ENCODE measurements at regions of chr9 and their contacts with region 1.

Region 1: DNA sequence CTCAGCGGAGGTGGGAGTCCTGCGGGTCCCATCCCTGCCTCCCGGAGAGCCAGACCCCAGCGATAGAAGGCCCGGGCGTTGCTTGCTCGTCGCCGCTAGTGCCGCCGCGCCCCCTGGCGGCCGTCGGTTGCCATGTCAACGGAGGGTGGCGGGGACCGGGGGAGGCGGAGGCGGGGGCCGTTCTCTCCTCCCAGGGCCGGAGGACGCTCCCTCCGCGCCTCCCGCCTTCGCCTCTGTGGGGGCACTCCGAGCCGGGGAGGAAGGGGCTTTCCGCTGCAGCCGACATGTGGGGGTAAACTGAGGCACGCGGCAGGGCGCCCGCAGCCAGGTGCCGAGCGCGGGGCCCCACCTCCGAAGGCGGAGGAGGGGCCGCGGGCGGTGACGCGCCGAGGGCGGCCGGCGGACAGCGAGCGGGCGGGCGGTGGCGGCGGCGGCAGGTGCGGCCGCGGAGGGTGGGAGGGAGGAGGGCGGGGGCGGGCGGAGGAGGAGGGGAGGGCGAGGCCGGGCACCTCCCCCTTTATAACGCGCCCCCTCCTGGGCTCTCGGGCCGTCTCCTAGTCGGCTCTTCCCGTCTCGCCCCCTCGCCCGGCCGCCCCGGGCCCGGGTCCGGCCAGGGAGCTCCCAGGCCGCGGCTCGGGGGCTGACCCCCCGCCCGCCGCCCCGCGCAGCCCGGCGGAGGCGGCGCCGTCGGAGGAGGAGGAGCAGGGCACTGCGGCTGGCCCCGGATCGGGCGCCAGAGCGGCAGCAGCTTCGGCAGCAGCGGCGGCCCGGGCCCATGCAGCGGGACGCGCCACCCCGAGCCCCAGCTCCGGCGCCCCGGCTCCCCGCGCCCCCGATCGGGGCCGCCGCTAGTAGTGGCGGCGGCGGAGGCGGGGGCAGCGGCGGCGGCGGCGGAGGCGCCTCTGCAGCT is 556 bp upstream of the CDK9 start:
- DNase-seq: peak; percentile 93
- H3K4me3 Mint-ChIP-seq: peak overlapping the region; percentile 97
- H3K27ac Mint-ChIP-seq: peak overlapping the region; percentile 93
- H3K4me1 Mint-ChIP-seq: peaks cover 78% of the 10 kb centered on the region
- H3K27me3 Mint-ChIP-seq: no peaks in the 10 kb centered on the region

Region 2: DNA sequence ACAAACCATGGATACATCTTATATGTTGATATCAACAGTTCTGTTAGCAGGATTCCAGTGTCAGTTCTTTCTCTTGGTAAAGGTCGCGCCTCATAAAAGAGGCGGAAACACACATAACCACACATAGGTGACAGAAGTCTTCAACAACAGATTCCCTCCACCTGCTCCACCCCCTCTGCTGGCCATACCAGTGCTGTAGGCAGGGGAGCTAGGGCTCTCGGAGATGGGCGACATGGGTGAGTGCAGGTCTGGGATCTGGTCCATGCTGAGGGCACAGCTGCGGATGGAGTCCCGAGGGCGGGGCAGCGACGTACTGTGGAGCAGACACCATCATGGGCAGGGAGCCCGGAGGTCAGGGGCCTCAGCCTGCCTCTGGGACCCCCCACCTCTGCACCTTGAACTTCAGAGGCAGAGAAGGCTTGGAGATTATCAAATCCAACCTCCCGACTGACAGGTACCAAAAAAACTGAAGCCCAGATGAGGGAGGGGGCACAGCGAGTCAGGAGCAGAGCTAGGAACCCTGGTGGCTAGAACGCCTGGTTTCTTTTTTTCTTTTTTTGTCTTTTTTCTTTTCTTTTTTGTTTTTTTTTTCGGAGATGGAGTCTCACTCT is 38.2 kb before region 1 on chr9:
- CTCF ChIA-PET with region 1: no interaction called
- POLR2A ChIA-PET with region 1: interaction called, 12 read pairs
- DNase-seq: no peak
- H3K4me3 Mint-ChIP-seq: no peak overlapping the region
- H3K27ac Mint-ChIP-seq: no peak overlapping the region
- H3K4me1 Mint-ChIP-seq: peaks cover 5% of the 10 kb centered on the region
- H3K27me3 Mint-ChIP-seq: no peaks in the 10 kb centered on the region

Region 3: DNA sequence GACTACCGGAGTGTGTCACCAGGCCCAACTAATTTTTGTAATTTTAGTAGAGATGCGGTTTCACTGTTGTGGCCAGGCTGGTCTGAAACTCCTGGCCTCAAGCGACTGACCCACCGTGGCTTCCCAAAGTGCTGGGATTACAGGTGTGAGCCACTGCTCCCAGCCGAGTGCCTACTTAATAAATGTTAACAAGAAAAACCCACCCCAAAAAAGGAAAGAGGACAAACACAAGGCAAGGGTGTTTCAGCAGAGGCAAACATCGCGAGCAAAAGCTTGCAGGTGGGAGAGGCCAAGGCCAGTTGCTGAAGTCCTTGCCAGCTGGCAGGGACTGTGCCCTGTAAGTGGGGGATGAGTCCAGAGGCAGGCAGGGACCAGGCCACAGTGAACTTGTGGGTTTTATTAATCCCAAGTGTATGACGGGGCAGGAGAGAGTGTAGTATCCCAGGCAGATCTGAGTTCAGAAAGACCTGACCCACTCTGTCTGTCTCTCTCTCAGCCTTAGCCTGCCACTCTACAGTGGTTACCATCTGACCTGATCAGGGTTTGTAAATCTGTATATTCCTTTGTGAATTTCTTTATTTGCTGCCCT is 11.0 kb after region 1 on chr9:
- CTCF ChIA-PET with region 1: interaction called, 5 read pairs
- POLR2A ChIA-PET with region 1: interaction called, 44 read pairs
- DNase-seq: no peak
- H3K4me3 Mint-ChIP-seq: peak overlapping the region; percentile 35
- H3K27ac Mint-ChIP-seq: peak overlapping the region; percentile 68
- H3K4me1 Mint-ChIP-seq: peaks cover 32% of the 10 kb centered on the region
- H3K27me3 Mint-ChIP-seq: no peaks in the 10 kb centered on the region

Region 4: GRCh38 chr9:127869310-127870152 is 84.3 kb after region 1 on chr9:
- CTCF ChIA-PET with region 1: interaction called, 18 read pairs
- POLR2A ChIA-PET with region 1: interaction called, 9 read pairs
- DNase-seq: peak; percentile 83
- H3K4me3 Mint-ChIP-seq: no peak overlapping the region
- H3K27ac Mint-ChIP-seq: no peak overlapping the region
- H3K4me1 Mint-ChIP-seq: peaks cover 17% of the 10 kb centered on the region
- H3K27me3 Mint-ChIP-seq: no peaks in the 10 kb centered on the region

Region 5: DNA sequence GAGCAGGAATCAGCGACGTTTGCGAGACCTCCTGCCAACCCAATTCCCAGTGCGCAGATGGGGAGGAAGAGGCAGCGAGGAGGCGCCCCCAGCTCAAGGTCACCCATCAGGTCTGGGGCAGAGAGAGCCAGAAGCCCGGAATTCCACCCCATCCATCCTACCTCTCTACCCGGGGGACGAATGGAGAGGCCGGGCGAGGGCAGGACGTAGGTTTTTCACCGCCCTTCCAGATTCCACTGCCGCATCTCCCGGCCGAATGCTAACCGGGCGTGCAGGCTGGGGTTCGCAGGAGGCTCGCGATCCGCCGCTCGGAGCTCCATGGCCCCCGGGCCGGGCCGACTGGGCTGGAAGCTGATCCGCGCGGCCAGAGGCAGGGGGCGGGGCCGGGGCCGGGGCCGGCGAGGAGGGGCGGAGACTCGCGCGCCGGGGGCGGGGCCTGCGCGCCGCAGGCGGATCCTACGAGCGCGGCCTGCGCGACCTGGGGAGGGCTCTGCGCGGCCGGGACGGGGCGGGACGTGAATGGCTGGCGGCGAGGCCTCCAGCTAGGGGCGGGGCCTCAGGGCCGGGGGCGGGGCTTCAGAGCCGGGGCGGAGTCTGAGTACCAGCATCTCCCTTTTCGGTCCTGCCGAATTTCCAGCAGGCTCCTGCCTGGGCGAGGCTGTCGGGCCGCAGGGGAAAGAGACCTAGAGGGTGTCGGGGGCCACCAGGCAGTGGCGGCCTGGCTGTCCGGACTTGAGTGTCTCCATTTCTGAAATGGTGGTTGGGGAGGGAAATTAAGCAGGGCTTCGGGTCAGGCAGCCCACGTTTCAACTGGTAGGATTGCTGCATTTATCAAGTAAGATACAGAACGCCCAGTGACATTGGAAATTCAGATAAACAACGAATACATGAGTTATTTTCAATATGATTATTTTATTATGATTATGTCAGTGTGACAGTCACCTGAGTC is 131.7 kb after region 1 on chr9 and contains the start of gene ST6GALNAC4:
- CTCF ChIA-PET with region 1: interaction called, 14 read pairs
- POLR2A ChIA-PET with region 1: interaction called, 7 read pairs
- DNase-seq: peak; percentile 96
- H3K4me3 Mint-ChIP-seq: peak within 1 kb of the TSS; percentile 72
- H3K27ac Mint-ChIP-seq: peak within 1 kb of the TSS; percentile 65
- H3K4me1 Mint-ChIP-seq: peaks cover 65% of the 10 kb centered on the region
- H3K27me3 Mint-ChIP-seq: peaks cover under 1% of the 10 kb centered on the region
- total RNA-seq, gene ST6GALNAC4: 19.4 to 21.5 TPM

Measured in activated CD4-positive, alpha-beta memory T cell treated with anti-CD3 and anti-CD28 coated beads, Interleukin-2, amount 10 ng/mL, durations not matched to agents 7 days and 5 days (primary cell).